ENCODE measurements at regions of chrX and their contacts with region 1.

Region 1: DNA sequence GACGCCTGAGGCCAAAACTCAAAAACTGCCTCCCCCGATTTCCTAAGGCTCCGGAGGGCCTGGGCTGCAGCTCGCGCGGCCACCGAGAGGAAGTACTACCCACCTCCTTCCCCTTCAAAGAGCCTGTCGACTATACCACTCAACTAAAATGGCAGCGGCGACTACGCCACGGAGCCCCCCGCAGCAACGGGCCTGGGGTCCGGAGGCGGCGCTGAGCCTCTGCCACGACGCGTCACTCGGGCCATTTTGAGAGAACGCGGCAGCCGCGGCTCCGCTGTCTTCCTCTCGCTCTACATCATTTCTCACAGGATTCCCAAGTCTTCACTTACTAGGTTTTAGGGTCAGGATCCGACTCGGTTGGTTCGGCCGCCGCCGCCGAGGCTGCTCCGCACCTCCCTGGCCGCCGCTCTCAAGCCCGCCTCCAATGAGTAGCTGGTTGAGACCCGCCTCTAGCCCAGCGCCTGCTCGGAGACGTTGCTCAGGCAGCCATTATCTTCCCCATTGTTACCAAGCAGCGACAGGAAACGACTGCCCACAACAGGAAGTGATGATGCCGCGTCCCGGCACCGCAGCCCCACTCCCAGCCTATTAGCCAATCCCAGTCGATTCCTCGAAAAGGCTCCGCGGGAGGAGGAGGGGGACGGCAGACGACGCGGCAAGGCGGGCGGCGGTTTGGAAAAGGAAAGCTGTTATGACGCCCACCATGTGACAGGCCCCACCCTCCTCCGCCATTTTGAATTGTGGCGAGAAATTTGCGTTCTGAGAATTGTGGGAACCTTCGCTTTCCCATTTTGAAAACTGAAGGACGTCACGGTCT is at the start of gene RLIM:
- DNase-seq: peak; percentile 82 to 95 (median 92)
- H3K4me3 ChIP-seq: peak within 1 kb of the TSS; percentile 45 to 92 (median 76)
- H3K27ac ChIP-seq: peak within 1 kb of the TSS; percentile 75 to 96 (median 92)
- H3K27me3 ChIP-seq: peaks cover 0 to 22% (median 0%) of the 10 kb centered on the region in 45 donors
- CTCF ChIP-seq: peak in 4 of 56 donors; percentile 7 to 19 (median 14)
- total RNA-seq, gene RLIM: 38.7 to 94.6 (median 67.5) TPM

Region 2: DNA sequence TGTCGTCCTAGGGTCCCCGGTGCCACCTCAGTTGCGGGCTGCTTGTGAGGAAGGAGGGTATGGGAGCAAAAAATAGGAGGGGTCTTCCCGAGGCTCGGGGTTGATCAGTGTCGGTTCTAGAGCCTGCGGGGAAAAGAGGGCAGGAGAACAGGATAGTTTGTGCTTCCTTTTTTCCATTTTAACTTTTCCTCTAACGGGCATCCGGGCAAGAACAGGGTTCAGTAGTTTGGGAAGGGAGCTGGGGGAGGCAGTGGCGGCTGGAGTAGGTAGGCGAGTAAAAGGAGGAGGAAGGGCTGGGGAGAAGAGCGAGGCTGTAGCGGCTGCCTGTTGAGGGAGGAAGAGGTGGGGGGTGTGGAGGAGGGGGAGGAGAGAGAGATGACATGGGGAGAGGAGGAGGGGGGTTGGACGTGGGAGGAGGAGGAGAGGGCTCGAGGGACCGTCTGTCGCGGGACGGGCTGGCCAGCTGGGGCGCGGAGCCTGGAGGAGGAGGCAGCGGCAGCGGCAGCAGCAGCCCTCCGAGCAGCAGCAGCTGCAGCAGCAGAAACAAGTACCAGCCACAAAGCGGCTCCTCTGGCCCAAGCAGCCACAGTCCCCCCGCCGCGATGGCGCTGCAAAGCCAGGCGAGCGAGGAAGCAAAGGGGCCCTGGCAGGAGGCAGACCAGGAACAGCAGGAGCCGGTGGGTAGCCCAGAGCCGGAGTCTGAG is 193.1 kb before region 1 on chrX and contains the start of gene SLC16A2:
- intact Hi-C with region 1: loop called in 1 of 2 experiments (anchors 10 kb)
- DNase-seq: peak; percentile 47 to 79 (median 64)
- H3K4me3 ChIP-seq: peak within 1 kb of the TSS; percentile 42 to 74 (median 59)
- H3K27ac ChIP-seq: peak within 1 kb of the TSS; percentile 40 to 94 (median 85)
- H3K27me3 ChIP-seq: peaks cover 0 to 82% (median 17%) of the 10 kb centered on the region in 45 donors
- CTCF ChIP-seq: peak in 3 of 56 donors; percentile 8 to 14 (median 9)
- total RNA-seq, gene SLC16A2: 9.2 to 23.2 (median 14.5) TPM

Region 3: GRCh38 chrX:75156021-75156945 is 542.0 kb after region 1 on chrX and contains the start of gene ABCB7:
- intact Hi-C with region 1: loop called in 1 of 2 experiments (anchors 10 kb)
- DNase-seq: peak in 9 of 10 donors; percentile 41 to 72 (median 63)
- H3K4me3 ChIP-seq: peak within 1 kb of the TSS; percentile 35 to 77 (median 63)
- H3K27ac ChIP-seq: peak within 1 kb of the TSS; percentile 16 to 96 (median 80)
- H3K27me3 ChIP-seq: peaks cover 0 to 20% (median 0%) of the 10 kb centered on the region in 45 donors
- CTCF ChIP-seq: peak in 38 of 56 donors; percentile 14 to 54 (median 32)
- total RNA-seq, gene ABCB7: 15.6 to 34.0 (median 21.5) TPM

Region 4: DNA sequence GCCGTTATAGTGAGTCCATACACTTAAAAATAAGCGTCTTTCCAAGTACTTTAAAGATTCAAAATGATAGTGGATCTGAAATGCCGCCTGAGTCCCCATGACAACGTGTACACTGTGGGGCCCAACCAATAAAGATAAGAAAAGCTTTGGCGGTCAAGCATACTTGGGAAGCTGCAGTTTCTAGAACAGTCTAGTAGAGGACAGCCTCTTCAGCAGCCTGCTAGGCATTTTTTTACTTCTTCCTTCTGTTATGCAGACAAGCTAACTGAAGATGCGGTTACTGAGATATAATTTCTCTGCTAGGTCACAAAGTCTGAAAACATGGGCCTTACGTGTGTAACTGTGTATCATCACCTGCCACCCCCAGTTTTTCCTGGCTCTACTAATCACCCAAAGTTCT is 659.2 kb after region 1 on chrX:
- intact Hi-C with region 1: loop called in 1 of 2 experiments (anchors 10 kb)
- DNase-seq: no peak
- H3K4me3 ChIP-seq: peak overlapping the region; percentile 44 to 83 (median 69)
- H3K27ac ChIP-seq: peak overlapping the region in 58 of 59 donors; percentile 17 to 94 (median 84)
- H3K27me3 ChIP-seq: peaks cover 0 to 17% (median 0%) of the 10 kb centered on the region in 45 donors
- CTCF ChIP-seq: no peak